ENCODE measurements at regions of chr6 and their contacts with region 1.

Region 1: GRCh38 chr6:88982720-88983119 is 19.3 kb upstream of the RNGTT start:
- DNase-seq: peak in 2 of 5 donors; percentile 47 to 54
- H3K4me3 ChIP-seq: no peak overlapping the region
- H3K4me3 Mint-ChIP-seq: no peak overlapping the region
- H3K27ac ChIP-seq: no peak overlapping the region
- H3K27ac Mint-ChIP-seq: no peak overlapping the region
- H3K4me1 ChIP-seq: peaks cover 3% of the 10 kb centered on the region
- H3K4me1 Mint-ChIP-seq: no peaks in the 10 kb centered on the region
- H3K27me3 ChIP-seq: no peaks in the 10 kb centered on the region
- H3K27me3 Mint-ChIP-seq: peaks cover 2 to 4% of the 10 kb centered on the region in 2 donors

Region 2: DNA sequence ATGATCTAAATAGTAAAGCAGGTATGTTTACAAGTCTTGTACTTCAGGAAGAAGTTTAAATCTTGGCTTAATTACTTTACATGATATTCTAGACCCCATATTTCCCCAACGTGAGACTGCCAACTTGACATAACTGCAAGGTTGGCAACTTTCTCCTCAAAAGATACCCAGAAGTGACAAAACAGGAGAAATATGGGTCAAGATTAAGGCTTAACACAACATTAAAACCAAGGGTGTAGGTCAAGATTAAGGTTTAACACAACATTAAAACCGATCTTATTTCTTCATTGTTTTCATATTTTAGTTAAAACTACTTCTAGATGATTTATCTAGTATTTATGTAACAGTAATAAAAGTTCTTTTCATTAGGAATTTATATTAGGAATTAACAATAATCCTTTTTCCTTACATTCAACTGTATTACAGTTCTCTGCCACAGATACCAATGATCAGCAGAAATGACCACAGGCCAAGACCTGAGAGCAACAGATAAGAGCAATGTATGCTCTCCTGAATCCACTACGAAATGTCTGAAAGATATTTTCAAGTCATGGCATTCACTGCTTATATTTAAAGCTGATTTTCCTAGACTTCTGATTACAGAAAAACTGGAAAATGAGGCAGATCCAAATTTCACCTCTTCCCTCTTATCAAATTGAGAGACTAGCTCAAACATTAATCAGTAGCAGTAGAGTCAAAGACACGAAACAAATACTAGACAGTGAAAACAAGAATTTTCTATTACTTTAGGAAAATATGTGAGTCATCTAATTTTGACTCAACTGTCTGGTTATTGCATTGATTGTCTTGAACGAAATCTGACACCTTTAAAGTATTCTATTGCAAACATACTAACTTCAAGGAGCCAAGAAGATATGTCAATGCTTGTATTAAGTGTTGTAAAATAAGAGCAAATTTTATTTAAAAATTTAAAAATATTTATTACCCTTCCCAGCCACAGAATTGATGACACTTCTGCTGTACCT is 91.6 kb before region 1 on chr6:
- CTCF ChIA-PET with region 1: no interaction called
- POLR2A ChIA-PET with region 1: no interaction called
- DNase-seq: no peak
- H3K4me3 ChIP-seq: no peak overlapping the region
- H3K4me3 Mint-ChIP-seq: no peak overlapping the region
- H3K27ac ChIP-seq: no peak overlapping the region
- H3K27ac Mint-ChIP-seq: peak overlapping the region in 1 of 8 donors; percentile 12
- H3K4me1 ChIP-seq: no peaks in the 10 kb centered on the region
- H3K4me1 Mint-ChIP-seq: no peaks in the 10 kb centered on the region
- H3K27me3 ChIP-seq: no peaks in the 10 kb centered on the region
- H3K27me3 Mint-ChIP-seq: no peaks in the 10 kb centered on the region

Region 3: DNA sequence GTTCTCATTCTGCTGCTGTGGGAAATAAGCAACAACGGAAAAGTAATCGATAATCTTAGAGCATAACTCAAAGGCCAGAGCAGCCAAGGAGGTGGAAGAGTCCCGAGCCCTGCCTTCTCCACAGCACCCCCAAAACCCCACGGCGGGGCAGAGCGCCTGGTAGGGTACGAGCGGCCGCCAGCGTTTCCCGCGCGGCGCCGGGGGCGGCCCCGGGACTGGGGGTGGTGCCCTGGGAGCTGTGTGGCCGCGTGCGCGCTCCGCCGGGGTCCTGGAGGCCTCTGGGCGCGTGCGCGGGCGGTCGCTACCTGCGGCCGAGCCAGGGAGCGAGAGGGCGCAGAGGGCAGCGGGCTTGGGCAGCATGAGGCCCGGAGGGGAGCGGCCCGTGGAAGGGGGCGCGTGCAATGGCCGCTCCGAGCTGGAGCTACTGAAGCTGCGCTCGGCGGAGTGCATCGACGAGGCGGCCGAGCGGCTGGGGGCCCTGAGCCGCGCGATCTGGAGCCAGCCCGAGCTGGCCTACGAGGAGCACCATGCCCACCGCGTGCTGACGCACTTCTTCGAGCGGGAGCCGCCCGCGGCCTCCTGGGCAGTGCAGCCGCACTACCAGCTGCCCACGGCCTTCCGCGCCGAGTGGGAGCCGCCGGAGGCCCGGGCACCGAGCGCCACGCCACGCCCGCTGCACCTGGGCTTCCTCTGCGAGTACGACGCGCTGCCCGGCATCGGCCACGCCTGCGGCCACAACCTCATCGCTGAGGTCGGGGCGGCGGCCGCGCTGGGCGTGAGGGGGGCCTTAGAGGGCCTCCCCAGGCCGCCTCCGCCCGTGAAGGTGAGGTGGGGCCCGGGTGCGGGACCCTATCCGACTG is 163.3 kb after region 1 on chr6 and contains the start of gene PM20D2:
- CTCF ChIA-PET with region 1: interaction called, 15 read pairs
- POLR2A ChIA-PET with region 1: no interaction called
- DNase-seq: peak; percentile 47 to 70 (median 59)
- H3K4me3 ChIP-seq: peak within 1 kb of the TSS; percentile 73
- H3K4me3 Mint-ChIP-seq: peak within 1 kb of the TSS; percentile 91 to 98 (median 94)
- H3K27ac ChIP-seq: peak within 1 kb of the TSS; percentile 62
- H3K27ac Mint-ChIP-seq: peak within 1 kb of the TSS; percentile 44 to 97 (median 96)
- H3K4me1 ChIP-seq: peaks cover 9% of the 10 kb centered on the region
- H3K4me1 Mint-ChIP-seq: peaks cover 22 to 45% (median 36%) of the 10 kb centered on the region in 3 donors
- H3K27me3 ChIP-seq: no peaks in the 10 kb centered on the region
- H3K27me3 Mint-ChIP-seq: no peaks in the 10 kb centered on the region
- total RNA-seq, gene PM20D2: 17.6 to 18.7 TPM

Region 4: GRCh38 chr6:89242574-89243330 is 260.0 kb after region 1 on chr6:
- CTCF ChIA-PET with region 1: interaction called, 26 read pairs
- POLR2A ChIA-PET with region 1: no interaction called
- DNase-seq: peak in 1 of 5 donors; percentile 10
- H3K4me3 ChIP-seq: no peak overlapping the region
- H3K4me3 Mint-ChIP-seq: no peak overlapping the region
- H3K27ac ChIP-seq: no peak overlapping the region
- H3K27ac Mint-ChIP-seq: no peak overlapping the region
- H3K4me1 ChIP-seq: peaks cover 14% of the 10 kb centered on the region
- H3K4me1 Mint-ChIP-seq: peaks cover 16 to 22% (median 20%) of the 10 kb centered on the region in 3 donors
- H3K27me3 ChIP-seq: no peaks in the 10 kb centered on the region
- H3K27me3 Mint-ChIP-seq: peaks cover 9 to 24% of the 10 kb centered on the region in 2 donors

Region 5: DNA sequence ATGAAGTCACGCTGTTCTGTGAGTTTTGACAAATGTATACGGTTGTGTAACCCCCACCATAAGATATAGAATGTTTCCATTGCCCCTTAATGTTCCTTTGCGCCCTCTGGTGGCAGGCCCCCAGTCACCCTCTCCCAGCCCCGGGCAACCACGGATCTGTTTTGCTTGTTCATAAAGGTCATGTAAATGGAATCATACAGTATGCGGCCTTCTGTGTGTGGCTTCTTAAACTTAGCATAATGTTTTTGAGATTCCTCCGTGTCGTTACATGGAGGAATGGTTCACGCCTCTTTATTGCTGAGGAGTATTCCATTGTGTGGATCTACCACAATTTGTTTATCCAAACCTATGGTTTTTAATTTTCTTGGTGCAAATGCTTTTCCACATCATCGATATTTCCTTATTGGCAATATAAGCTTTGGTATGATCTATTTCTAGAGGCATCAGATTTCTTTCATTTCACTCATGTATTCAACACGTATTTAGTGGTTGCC is 627.5 kb after region 1 on chr6:
- CTCF ChIA-PET with region 1: interaction called, 11 read pairs
- POLR2A ChIA-PET with region 1: no interaction called
- DNase-seq: peak; percentile 61 to 83 (median 71)
- H3K4me3 ChIP-seq: no peak overlapping the region
- H3K4me3 Mint-ChIP-seq: no peak overlapping the region
- H3K27ac ChIP-seq: no peak overlapping the region
- H3K27ac Mint-ChIP-seq: no peak overlapping the region
- H3K4me1 ChIP-seq: no peaks in the 10 kb centered on the region
- H3K4me1 Mint-ChIP-seq: peaks cover 0 to 5% (median 0%) of the 10 kb centered on the region in 3 donors
- H3K27me3 ChIP-seq: no peaks in the 10 kb centered on the region
- H3K27me3 Mint-ChIP-seq: no peaks in the 10 kb centered on the region